Activated B cell treated with CpG ODN at 0.5 μM for 24 hours (primary cell): ENCODE measurements at regions of chr11 and their contacts with region 1.

Region 1: DNA sequence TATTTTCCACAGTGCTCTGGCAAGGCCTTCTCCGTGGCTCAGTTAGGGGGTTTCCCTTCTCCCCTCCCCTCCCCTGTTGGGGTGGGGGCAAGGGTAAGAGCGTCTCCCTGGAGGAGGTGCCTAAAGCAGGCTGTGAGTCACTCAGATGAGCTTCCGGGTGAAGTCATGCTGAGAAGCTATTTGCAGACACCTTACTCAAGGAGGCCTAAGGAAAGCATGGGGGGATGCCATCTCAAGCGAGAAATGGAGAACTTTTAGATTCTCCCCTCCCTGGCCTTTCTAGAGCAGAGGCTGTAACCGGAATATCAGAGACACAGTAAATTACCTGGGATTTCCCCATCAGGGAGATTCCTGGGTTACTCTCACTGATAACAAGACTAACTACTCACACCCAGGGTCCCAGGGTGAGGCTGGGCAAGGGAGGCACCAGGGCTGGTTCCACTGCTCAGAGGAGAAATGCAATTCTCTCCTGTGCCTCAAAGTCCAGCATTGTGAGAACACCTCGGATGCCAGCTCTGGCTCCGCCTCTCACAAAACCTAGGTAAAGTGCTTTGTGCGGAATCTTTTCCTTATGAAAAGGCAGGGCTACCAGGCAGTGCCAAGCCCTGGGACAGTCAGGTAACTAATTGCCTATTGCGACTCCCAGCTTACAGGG is 123.6 kb downstream of the ABTB2 start:
- DNase-seq: peak; percentile 67
- ATAC-seq: peak; percentile 75
- H3K4me3 Mint-ChIP-seq: peak overlapping the region; percentile 73
- H3K27ac Mint-ChIP-seq: peak overlapping the region; percentile 97
- H3K4me1 Mint-ChIP-seq: peaks cover 76% of the 10 kb centered on the region
- H3K27me3 Mint-ChIP-seq: no peaks in the 10 kb centered on the region
- CTCF ChIP-seq: no peak

Region 2: GRCh38 chr11:32583459-32584271 is 1650.5 kb before region 1 on chr11 and contains the start of gene EIF3M:
- CTCF ChIA-PET with region 1: no interaction called
- POLR2A ChIA-PET with region 1: no interaction called
- intact Hi-C with region 1: loop called (anchors 10 kb)
- DNase-seq: peak; percentile 90
- ATAC-seq: peak; percentile 100
- H3K4me3 Mint-ChIP-seq: peak within 1 kb of the TSS; percentile 95
- H3K27ac Mint-ChIP-seq: peak within 1 kb of the TSS; percentile 92
- H3K4me1 Mint-ChIP-seq: peaks cover 41% of the 10 kb centered on the region
- H3K27me3 Mint-ChIP-seq: no peaks in the 10 kb centered on the region
- CTCF ChIP-seq: no peak
- total RNA-seq, gene EIF3M: 234 and 248 TPM in 2 replicates

Region 3: DNA sequence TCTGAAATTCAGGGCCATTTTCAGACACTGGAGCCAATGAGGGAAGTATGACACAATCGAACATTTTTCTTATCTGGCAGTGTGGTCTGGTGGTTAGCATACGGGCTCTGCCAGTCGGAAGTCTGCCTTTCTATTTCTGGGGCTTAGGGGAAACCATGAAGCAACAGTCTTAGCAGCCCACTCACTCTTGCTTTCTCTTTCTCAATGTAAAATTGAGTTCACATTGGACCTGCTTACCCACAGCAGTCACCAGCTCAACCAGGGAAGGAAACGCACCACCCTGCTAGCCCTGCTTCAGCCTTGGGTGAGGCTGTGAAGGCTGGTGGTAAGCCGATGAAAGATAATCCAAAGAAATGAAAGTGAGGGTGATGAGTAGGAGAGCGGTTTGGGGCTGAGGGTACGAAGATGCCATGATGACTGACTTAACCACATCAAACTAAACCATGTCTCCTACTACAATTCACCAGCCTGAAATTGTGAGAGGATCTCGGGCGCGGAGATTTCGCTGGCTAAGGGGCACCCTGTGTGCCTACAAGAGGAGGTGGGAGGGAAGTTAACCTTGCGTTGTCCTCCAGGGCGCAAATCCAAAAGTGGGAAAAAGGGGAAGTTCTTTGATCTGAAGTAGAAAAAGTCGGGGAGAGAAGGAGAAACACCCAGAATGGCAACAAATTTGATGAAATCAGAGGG is 340.4 kb before region 1 on chr11:
- CTCF ChIA-PET with region 1: no interaction called
- POLR2A ChIA-PET with region 1: no interaction called
- intact Hi-C with region 1: loop called (anchors 2 kb)
- DNase-seq: peak; percentile 45
- ATAC-seq: peak; percentile 80
- H3K4me3 Mint-ChIP-seq: peak overlapping the region; percentile 92
- H3K27ac Mint-ChIP-seq: peak overlapping the region; percentile 94
- H3K4me1 Mint-ChIP-seq: peaks cover 70% of the 10 kb centered on the region
- H3K27me3 Mint-ChIP-seq: no peaks in the 10 kb centered on the region
- CTCF ChIP-seq: no peak

Region 4: GRCh38 chr11:34105079-34105956 is 128.9 kb before region 1 on chr11 and contains the start of gene NAT10:
- CTCF ChIA-PET with region 1: no interaction called
- POLR2A ChIA-PET with region 1: interaction called, 6 read pairs
- intact Hi-C with region 1: loop called (anchors 2 kb)
- DNase-seq: peak; percentile 91
- ATAC-seq: peak; percentile 92
- H3K4me3 Mint-ChIP-seq: peak within 1 kb of the TSS; percentile 97
- H3K27ac Mint-ChIP-seq: peak within 1 kb of the TSS; percentile 98
- H3K4me1 Mint-ChIP-seq: peaks cover 41% of the 10 kb centered on the region
- H3K27me3 Mint-ChIP-seq: peaks cover 2% of the 10 kb centered on the region
- CTCF ChIP-seq: no peak
- total RNA-seq, gene NAT10: 107 and 120 TPM in 2 replicates

Region 5: GRCh38 chr11:34134765-34135164 is 99.4 kb before region 1 on chr11:
- CTCF ChIA-PET with region 1: no interaction called
- POLR2A ChIA-PET with region 1: no interaction called
- intact Hi-C with region 1: no loop called
- DNase-seq: no peak
- ATAC-seq: no peak
- H3K4me3 Mint-ChIP-seq: no peak overlapping the region
- H3K27ac Mint-ChIP-seq: no peak overlapping the region
- H3K4me1 Mint-ChIP-seq: peaks cover 6% of the 10 kb centered on the region
- H3K27me3 Mint-ChIP-seq: no peaks in the 10 kb centered on the region
- CTCF ChIP-seq: no peak

Region 6: GRCh38 chr11:34208266-34209135 is 25.7 kb before region 1 on chr11:
- CTCF ChIA-PET with region 1: no interaction called
- POLR2A ChIA-PET with region 1: interaction called, 10 read pairs
- intact Hi-C with region 1: no loop called
- DNase-seq: no peak
- ATAC-seq: peak; percentile 83
- H3K4me3 Mint-ChIP-seq: no peak overlapping the region
- H3K27ac Mint-ChIP-seq: peak overlapping the region; percentile 10
- H3K4me1 Mint-ChIP-seq: peaks cover 32% of the 10 kb centered on the region
- H3K27me3 Mint-ChIP-seq: no peaks in the 10 kb centered on the region
- CTCF ChIP-seq: no peak

Region 7: DNA sequence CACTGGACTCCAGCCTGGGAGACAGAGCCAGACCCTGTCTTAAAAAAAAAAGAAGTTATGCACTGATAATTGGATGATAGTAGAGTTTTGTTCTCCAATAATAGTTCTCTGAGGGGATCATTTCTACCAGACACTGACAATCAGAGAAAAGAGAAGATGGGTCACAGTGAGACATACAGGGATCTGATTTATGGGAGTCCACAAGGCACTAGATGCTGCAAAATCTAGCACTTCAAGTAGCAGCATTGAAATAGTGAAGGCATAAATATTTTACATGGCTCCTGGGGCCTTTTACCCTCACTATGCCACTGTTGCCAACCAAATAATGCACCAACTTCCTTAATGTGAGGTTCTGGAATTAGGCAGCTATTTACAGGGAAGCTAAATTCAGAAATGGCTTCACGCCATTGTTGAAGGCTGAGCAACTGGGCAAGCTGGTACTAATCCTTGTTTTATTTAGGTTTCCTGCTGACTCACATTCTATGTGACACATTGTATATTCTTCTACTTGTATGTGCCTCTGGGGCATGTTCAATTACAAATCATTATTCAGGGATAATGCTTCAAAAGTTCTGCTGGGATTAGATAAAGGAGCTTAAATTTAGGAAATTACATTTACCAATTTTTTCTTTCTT is 161.8 kb after region 1 on chr11:
- CTCF ChIA-PET with region 1: no interaction called
- POLR2A ChIA-PET with region 1: no interaction called
- intact Hi-C with region 1: no loop called
- DNase-seq: no peak
- ATAC-seq: no peak
- H3K4me3 Mint-ChIP-seq: no peak overlapping the region
- H3K27ac Mint-ChIP-seq: no peak overlapping the region
- H3K4me1 Mint-ChIP-seq: no peaks in the 10 kb centered on the region
- H3K27me3 Mint-ChIP-seq: peaks cover 29% of the 10 kb centered on the region
- CTCF ChIP-seq: no peak

Region 8: GRCh38 chr11:34438529-34439507 is 204.6 kb after region 1 on chr11 and contains the start of gene CAT:
- CTCF ChIA-PET with region 1: no interaction called
- POLR2A ChIA-PET with region 1: no interaction called
- intact Hi-C with region 1: loop called (anchors 5 kb)
- DNase-seq: peak; percentile 96
- ATAC-seq: peak; percentile 90
- H3K4me3 Mint-ChIP-seq: peak within 1 kb of the TSS; percentile 99
- H3K27ac Mint-ChIP-seq: peak within 1 kb of the TSS; percentile 98
- H3K4me1 Mint-ChIP-seq: peaks cover 43% of the 10 kb centered on the region
- H3K27me3 Mint-ChIP-seq: no peaks in the 10 kb centered on the region
- CTCF ChIP-seq: no peak
- total RNA-seq, gene CAT: 79.8 and 81.2 TPM in 2 replicates